WTC11 (cell line): ENCODE measurements at regions of chr3 and their contacts with region 1.

Region 1: GRCh38 chr3:113495035-113495434 is 19.9 kb downstream of the SPICE1 start:
- DNase-seq: no peak
- ATAC-seq: no peak
- H3K4me3 Mint-ChIP-seq: no peak overlapping the region
- H3K27ac Mint-ChIP-seq: no peak overlapping the region
- H3K4me1 Mint-ChIP-seq: no peaks in the 10 kb centered on the region
- H3K27me3 Mint-ChIP-seq: no peaks in the 10 kb centered on the region
- CTCF ChIP-seq: 0 out of 2 replicates have a peak, but pooled peaks have one; percentile 24

Region 2: GRCh38 chr3:113531826-113532697 is 37.0 kb after region 1 on chr3 and contains the start of gene SIDT1:
- CTCF ChIA-PET with region 1: no interaction called
- POLR2A ChIA-PET with region 1: no interaction called
- DNase-seq: peak; percentile 26
- ATAC-seq: peak; percentile 42
- H3K4me3 Mint-ChIP-seq: peak within 1 kb of the TSS; percentile 88
- H3K27ac Mint-ChIP-seq: no peak within 1 kb of the TSS
- H3K4me1 Mint-ChIP-seq: peaks cover 13% of the 10 kb centered on the region
- H3K27me3 Mint-ChIP-seq: peaks cover 88% of the 10 kb centered on the region
- CTCF ChIP-seq: no peak
- total RNA-seq, gene SIDT1: 0.21 to 0.23 TPM (median 0.22 TPM) in 3 replicates

Region 3: GRCh38 chr3:113626503-113627371 is 131.7 kb after region 1 on chr3:
- CTCF ChIA-PET with region 1: interaction called, 17 read pairs
- POLR2A ChIA-PET with region 1: no interaction called
- DNase-seq: peak; percentile 76
- ATAC-seq: peak; percentile 97
- H3K4me3 Mint-ChIP-seq: no peak overlapping the region
- H3K27ac Mint-ChIP-seq: no peak overlapping the region
- H3K4me1 Mint-ChIP-seq: 0 out of 2 replicates have a peak, but pooled peaks cover 7% of the 10 kb centered on the region
- H3K27me3 Mint-ChIP-seq: peaks cover 14% of the 10 kb centered on the region
- CTCF ChIP-seq: peak; percentile 69; the same call in 1 of the 2 replicates